Common myeloid progenitor, CD34-positive (primary cell): ENCODE measurements at regions of chr3 and their contacts with region 1.

Region 1: DNA sequence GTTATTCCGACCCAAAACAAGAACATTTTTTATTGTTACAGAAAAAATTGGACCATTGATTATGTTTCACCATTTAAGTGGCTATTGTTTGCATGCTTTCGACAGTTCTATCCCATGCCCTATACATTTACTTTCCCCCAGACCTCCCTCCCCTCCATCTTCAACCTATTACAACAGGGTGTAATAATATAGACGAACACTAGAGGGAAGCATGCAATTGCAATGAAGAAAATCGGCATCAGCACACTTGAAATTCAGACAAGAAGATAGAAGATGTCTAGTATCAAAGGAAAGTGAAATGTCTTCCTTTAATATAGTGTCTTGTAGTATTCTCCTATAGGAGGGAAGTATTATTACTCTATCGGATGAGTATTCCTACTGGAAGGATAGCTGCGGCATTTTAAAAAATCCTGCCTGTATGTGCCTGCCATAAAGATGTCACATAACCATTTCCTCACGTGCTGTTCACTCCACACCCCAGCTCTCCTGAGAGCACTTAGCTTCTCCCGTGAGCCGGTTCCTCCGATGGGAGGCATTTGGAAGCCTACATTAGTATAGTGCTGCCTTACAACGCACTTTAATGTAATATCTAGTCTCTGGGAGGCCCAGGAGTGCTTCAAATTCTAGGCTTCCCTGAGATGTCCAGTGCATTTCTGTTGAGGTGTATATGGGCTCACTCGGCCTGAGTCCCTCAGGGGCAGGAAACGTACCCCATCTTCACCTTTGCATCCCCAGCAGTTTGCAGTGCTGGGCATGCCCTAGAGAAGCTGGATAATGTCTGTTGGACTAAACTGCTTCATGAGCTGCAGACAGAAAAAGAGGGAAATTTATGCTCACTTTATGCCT is 17.8 kb upstream of the ERICH6 start:
- DNase-seq: peak; percentile 69 to 81 (median 80)
- H3K4me3 ChIP-seq: peak overlapping the region in 1 of 7 experiments; percentile 34
- H3K27ac ChIP-seq: no peak overlapping the region
- H3K4me1 ChIP-seq: peaks cover 0 to 5% (median 2%) of the 10 kb centered on the region in 4 experiments
- H3K27me3 ChIP-seq: no peaks in the 10 kb centered on the region

Region 2: DNA sequence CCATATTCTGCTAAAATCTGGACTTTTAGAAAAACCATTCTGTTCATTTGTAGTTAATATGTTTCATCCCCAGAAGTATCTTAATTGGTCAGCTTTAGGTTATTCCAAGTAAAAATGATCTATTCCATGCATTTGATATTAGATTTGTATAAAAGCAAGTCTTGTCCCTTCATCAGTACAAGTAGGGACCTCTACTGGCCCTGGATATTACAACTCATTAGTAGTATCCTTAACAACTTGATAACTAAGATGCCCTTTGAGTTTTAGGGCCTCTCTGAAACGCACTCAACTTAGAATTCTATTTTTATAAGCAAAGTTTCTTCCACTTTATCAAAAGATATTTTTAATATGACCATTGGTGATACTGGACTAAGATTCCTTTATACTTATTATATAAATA is 143.6 kb before region 1 on chr3:
- CTCF ChIA-PET with region 1: no interaction called
- POLR2A ChIA-PET with region 1: no interaction called
- DNase-seq: peak in 2 of 3 donors; percentile 28 to 30
- H3K4me3 ChIP-seq: no peak overlapping the region
- H3K27ac ChIP-seq: no peak overlapping the region
- H3K4me1 ChIP-seq: peaks cover 0 to 9% (median 4%) of the 10 kb centered on the region in 4 experiments
- H3K27me3 ChIP-seq: no peaks in the 10 kb centered on the region

Region 3: GRCh38 chr3:150627557-150627956 is 94.0 kb before region 1 on chr3:
- CTCF ChIA-PET with region 1: no interaction called
- POLR2A ChIA-PET with region 1: no interaction called
- DNase-seq: no peak
- H3K4me3 ChIP-seq: no peak overlapping the region
- H3K27ac ChIP-seq: no peak overlapping the region
- H3K4me1 ChIP-seq: no peaks in the 10 kb centered on the region
- H3K27me3 ChIP-seq: no peaks in the 10 kb centered on the region

Region 4: GRCh38 chr3:150775091-150775501 is 53.6 kb after region 1 on chr3:
- CTCF ChIA-PET with region 1: interaction called, 15 read pairs
- POLR2A ChIA-PET with region 1: no interaction called
- DNase-seq: no peak
- H3K4me3 ChIP-seq: no peak overlapping the region
- H3K27ac ChIP-seq: no peak overlapping the region
- H3K4me1 ChIP-seq: no peaks in the 10 kb centered on the region
- H3K27me3 ChIP-seq: no peaks in the 10 kb centered on the region